A549 (cell line): ENCODE measurements at regions of chr7 and their contacts with region 1.

Region 1: DNA sequence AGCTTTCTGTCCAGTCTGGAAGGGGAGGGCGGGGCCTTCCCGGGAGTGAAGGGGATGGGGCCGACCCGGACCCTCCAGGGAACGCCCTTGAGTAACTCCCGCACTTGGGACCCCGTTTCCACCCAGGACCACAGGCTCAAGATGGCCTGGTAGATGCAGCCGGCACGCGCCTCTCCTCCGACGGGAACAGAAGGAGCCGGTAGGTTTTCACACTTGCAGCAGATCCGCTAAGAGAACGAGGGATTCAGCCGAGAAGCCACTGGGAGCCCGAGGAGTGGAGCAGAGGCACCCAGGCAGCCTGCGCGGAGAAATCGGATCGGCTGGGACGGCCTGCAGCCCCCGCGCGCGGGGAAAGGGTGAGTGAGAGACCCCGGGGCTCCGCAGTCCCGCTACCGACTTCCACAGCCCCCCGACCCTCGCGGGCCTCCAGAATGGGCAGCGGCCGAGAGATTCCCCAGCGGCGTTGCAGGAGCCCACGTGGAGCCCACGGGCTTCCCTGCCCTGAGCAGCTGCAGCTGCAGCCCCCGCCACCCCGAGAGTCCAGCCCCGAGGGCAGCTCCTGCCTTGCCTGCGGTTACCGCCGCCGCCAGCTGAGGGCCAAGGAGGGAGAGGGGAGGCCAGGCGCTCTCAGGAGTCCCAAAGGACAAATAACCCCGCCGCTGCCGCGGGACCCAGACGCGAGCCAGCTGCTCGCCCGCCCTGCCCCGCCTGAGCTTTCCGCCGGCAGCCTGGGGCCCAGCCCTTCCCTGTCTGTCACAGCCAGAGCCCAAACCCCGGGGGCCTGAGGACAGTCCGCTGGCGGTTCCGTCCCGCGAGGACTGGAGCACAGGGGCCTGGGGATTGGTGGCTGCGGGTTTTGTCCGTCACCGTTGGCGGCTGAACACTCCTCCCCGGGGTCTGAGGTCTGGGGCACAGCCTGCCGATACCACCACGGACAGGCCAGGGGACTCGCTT is 21.8 kb downstream of the IFT22 start:
- DNase-seq: no peak
- ATAC-seq: peak; percentile 43 to 58; a peak in 3 of 6 replicates
- H3K4me3 ChIP-seq: no peak overlapping the region
- H3K27ac ChIP-seq: no peak overlapping the region
- H3K4me1 ChIP-seq: no peaks in the 10 kb centered on the region
- CTCF ChIP-seq: no peak
- EP300 ChIP-seq: no peak
- POLR2A ChIP-seq: no peak
- RAD21 ChIP-seq: no peak

Region 2: DNA sequence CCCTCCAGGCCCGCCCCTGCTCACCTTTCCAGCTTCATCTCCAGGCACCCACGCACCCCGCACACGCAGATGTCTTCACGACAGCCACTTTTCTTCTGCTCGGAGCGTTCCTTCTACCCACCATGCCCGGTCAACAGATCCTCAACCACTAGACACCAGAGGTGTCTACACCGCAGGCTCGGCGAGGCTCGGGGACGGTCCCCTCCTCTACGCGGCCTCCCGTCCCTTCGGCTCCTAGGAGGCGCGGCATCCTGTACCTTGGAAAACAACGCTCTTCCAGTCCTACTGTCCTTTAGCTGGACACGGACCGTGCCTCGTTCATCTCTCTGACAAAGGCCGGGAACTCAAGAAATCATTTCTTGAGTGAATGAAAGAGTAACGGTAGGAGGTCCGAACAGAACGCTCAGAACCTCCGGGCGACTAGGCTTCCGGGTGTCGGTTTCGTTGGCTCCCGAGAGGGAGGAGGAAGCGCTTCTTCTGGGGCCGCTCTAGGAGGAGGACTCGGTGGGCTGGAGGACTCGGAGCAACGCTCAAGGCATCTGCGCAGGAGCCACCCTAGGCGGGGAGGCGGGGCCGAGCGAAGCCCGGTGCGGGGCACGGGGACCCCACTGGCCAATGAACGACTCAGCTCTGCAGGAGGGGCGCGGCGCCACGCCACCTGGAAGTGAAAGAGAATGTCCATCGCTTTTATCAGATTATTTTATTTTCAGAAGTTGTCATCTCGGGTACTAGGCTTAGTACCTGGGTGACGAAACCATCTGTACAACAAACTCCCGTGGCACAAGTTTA is 47.7 kb before region 1 on chr7:
- CTCF ChIA-PET with region 1: no interaction called
- POLR2A ChIA-PET with region 1: no interaction called
- DNase-seq: peak; percentile 96 to 99
- ATAC-seq: peak; percentile 99 to 100
- H3K4me3 ChIP-seq: peak overlapping the region; percentile 84
- H3K27ac ChIP-seq: peak overlapping the region; percentile 77 to 84
- H3K4me1 ChIP-seq: peaks cover 10% of the 10 kb centered on the region; the same call in 2 of the 3 replicates
- CTCF ChIP-seq: no peak
- EP300 ChIP-seq: no peak
- POLR2A ChIP-seq: peak; percentile 46
- RAD21 ChIP-seq: no peak

Region 3: GRCh38 chr7:101315336-101315735 is 15.5 kb after region 1 on chr7:
- CTCF ChIA-PET with region 1: interaction called, 10 read pairs
- POLR2A ChIA-PET with region 1: no interaction called
- DNase-seq: peak; percentile 59 to 78
- ATAC-seq: peak; percentile 64 to 68; a peak in 5 of 6 replicates
- H3K4me3 ChIP-seq: no peak overlapping the region
- H3K27ac ChIP-seq: no peak overlapping the region
- H3K4me1 ChIP-seq: no peaks in the 10 kb centered on the region
- CTCF ChIP-seq: peak; percentile 80
- EP300 ChIP-seq: no peak
- POLR2A ChIP-seq: no peak
- RAD21 ChIP-seq: peak in 1 of 2 experiments; percentile 22; a peak in 2 of 5 replicates